MCF 10A (cell line): ENCODE measurements at regions of chr20 and their contacts with region 1.

Region 1: GRCh38 chr20:45436732-45437391 is 20.9 kb downstream of the PIGT start:
- DNase-seq: peak; percentile 82
- H3K4me3 Mint-ChIP-seq: peak overlapping the region; percentile 74
- H3K27ac Mint-ChIP-seq: peak overlapping the region; percentile 57
- H3K4me1 Mint-ChIP-seq: no peaks in the 10 kb centered on the region
- H3K27me3 Mint-ChIP-seq: no peaks in the 10 kb centered on the region
- CTCF ChIP-seq: peak; percentile 95

Region 2: GRCh38 chr20:45311589-45312211 is 125.2 kb before region 1 on chr20:
- CTCF ChIA-PET with region 1: interaction called, 113 read pairs
- POLR2A ChIA-PET with region 1: interaction called, 3 read pairs
- intact Hi-C with region 1: no loop called
- DNase-seq: peak; percentile 55
- H3K4me3 Mint-ChIP-seq: no peak overlapping the region
- H3K27ac Mint-ChIP-seq: no peak overlapping the region
- H3K4me1 Mint-ChIP-seq: no peaks in the 10 kb centered on the region
- H3K27me3 Mint-ChIP-seq: no peaks in the 10 kb centered on the region
- CTCF ChIP-seq: peak; percentile 80

Region 3: GRCh38 chr20:45337367-45338120 is 99.3 kb before region 1 on chr20:
- CTCF ChIA-PET with region 1: interaction called, 32 read pairs
- POLR2A ChIA-PET with region 1: interaction called, 12 read pairs
- intact Hi-C with region 1: no loop called
- DNase-seq: peak; percentile 66
- H3K4me3 Mint-ChIP-seq: peak overlapping the region; percentile 45
- H3K27ac Mint-ChIP-seq: peak overlapping the region; percentile 97
- H3K4me1 Mint-ChIP-seq: peaks cover 58% of the 10 kb centered on the region
- H3K27me3 Mint-ChIP-seq: no peaks in the 10 kb centered on the region
- CTCF ChIP-seq: no peak

Region 4: DNA sequence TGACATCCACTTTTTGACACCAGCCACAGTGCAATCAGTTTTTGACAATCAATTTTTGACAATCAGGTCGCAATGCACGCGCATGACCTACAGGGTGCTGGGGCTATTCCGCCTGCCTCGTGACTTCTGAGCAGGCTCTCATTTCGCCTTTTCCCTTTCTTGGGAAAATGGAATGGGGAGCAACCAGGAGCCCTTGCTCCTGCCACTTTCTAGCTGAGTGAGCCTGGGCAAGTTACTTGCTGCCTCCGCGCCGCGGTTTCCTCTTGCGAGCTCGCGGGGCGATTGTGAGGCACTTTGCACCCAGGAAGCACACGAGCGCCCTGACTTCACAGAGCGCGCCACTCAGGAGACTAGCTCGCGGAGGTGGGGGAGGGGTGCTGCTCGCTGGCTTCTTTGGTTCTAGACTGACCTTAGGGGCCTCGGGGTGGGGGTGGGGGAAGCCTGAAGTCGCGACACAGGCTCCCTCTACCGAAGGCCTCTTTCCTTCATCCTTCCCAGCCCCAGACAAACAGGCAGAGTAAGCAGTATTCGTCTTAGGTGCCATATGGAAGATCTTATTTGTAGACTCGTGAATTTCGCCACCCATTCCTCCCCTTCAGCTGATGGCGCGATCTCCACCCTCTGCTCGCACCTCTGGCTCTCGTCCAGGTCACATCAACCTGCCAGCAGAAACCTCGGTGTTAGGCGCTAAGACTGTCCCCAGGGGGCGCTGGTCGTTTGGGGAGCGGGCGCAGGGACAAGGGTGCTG is 63.3 kb before region 1 on chr20:
- CTCF ChIA-PET with region 1: interaction called, 82 read pairs
- POLR2A ChIA-PET with region 1: interaction called, 5 read pairs
- intact Hi-C with region 1: loop called (anchors 1 kb)
- DNase-seq: peak; percentile 92
- H3K4me3 Mint-ChIP-seq: peak overlapping the region; percentile 40
- H3K27ac Mint-ChIP-seq: no peak overlapping the region
- H3K4me1 Mint-ChIP-seq: peaks cover 5% of the 10 kb centered on the region
- H3K27me3 Mint-ChIP-seq: no peaks in the 10 kb centered on the region
- CTCF ChIP-seq: peak; percentile 74

Region 5: GRCh38 chr20:45406259-45407066 is 30.4 kb before region 1 on chr20:
- CTCF ChIA-PET with region 1: interaction called, 24 read pairs
- POLR2A ChIA-PET with region 1: no interaction called
- intact Hi-C with region 1: no loop called
- DNase-seq: peak; percentile 40
- H3K4me3 Mint-ChIP-seq: peak overlapping the region; percentile 71
- H3K27ac Mint-ChIP-seq: no peak overlapping the region
- H3K4me1 Mint-ChIP-seq: no peaks in the 10 kb centered on the region
- H3K27me3 Mint-ChIP-seq: no peaks in the 10 kb centered on the region
- CTCF ChIP-seq: no peak

Region 6: DNA sequence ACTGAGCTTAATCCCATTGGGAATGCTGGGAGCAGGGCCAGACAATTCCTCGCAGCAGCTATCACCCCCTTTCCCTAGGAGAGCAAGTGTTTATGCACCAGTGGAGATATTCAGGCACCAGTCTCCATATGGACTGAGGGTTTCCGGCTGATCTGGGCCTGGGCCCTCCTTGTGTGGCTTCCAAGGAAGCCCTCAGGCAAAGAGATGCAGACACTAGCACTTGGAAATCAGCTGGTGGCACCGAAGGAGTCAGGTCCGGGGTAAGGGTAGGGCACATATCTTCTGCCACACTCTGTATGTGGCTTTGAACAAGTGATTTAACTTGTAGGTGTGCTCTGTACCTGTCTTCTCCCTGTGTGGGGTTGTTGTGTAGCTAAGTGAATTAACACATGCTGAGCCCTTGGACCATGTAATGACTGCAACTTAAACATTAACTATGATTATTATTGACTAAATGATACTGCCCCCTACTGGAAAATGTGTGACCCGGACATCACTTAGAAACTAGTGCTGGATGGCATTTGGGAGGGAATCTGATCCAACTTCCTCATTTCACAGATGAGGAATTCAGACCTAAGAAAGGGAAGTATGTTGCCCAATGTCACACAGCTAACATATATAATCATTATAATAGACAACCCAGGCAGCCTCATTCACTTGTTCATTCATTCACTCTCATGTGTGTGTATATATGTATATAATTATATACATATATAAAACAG is 13.4 kb after region 1 on chr20:
- CTCF ChIA-PET with region 1: interaction called, 92 read pairs
- POLR2A ChIA-PET with region 1: interaction called, 5 read pairs
- intact Hi-C with region 1: no loop called
- DNase-seq: peak; percentile 55
- H3K4me3 Mint-ChIP-seq: no peak overlapping the region
- H3K27ac Mint-ChIP-seq: no peak overlapping the region
- H3K4me1 Mint-ChIP-seq: no peaks in the 10 kb centered on the region
- H3K27me3 Mint-ChIP-seq: peaks cover 1% of the 10 kb centered on the region
- CTCF ChIP-seq: peak; percentile 47

Region 7: GRCh38 chr20:45501600-45501999 is 64.7 kb after region 1 on chr20:
- CTCF ChIA-PET with region 1: interaction called, 11 read pairs
- POLR2A ChIA-PET with region 1: no interaction called
- intact Hi-C with region 1: no loop called
- DNase-seq: no peak
- H3K4me3 Mint-ChIP-seq: no peak overlapping the region
- H3K27ac Mint-ChIP-seq: no peak overlapping the region
- H3K4me1 Mint-ChIP-seq: peaks cover 4% of the 10 kb centered on the region
- H3K27me3 Mint-ChIP-seq: peaks cover 40% of the 10 kb centered on the region
- CTCF ChIP-seq: no peak

Region 8: GRCh38 chr20:45647441-45648050 is 210.7 kb after region 1 on chr20:
- CTCF ChIA-PET with region 1: no interaction called
- POLR2A ChIA-PET with region 1: no interaction called
- intact Hi-C with region 1: no loop called
- DNase-seq: no peak
- H3K4me3 Mint-ChIP-seq: no peak overlapping the region
- H3K27ac Mint-ChIP-seq: no peak overlapping the region
- H3K4me1 Mint-ChIP-seq: no peaks in the 10 kb centered on the region
- H3K27me3 Mint-ChIP-seq: peaks cover 11% of the 10 kb centered on the region
- CTCF ChIP-seq: no peak